Activated CD4-positive, alpha-beta T cell treated with anti-CD3 and anti-CD28 coated beads, Interleukin-2, amount 10 ng/mL, durations not matched to agents 24 days and 14 days (primary cell): ENCODE measurements at regions of chr6 and their contacts with region 1.

Region 1: GRCh38 chr6:43174263-43175112 is 3.4 kb downstream of the SRF start:
- DNase-seq: peak; percentile 99
- H3K4me3 Mint-ChIP-seq: peak overlapping the region; percentile 94
- H3K27ac Mint-ChIP-seq: peak overlapping the region; percentile 84
- H3K4me1 Mint-ChIP-seq: peaks cover 39% of the 10 kb centered on the region
- H3K27me3 Mint-ChIP-seq: no peaks in the 10 kb centered on the region

Region 2: GRCh38 chr6:42928986-42929820 is 245.3 kb before region 1 on chr6 and contains the start of gene CNPY3:
- intact Hi-C with region 1: loop called (anchors 1 kb)
- DNase-seq: peak; percentile 98
- H3K4me3 Mint-ChIP-seq: peak within 1 kb of the TSS; percentile 91
- H3K27ac Mint-ChIP-seq: peak within 1 kb of the TSS; percentile 98
- H3K4me1 Mint-ChIP-seq: peaks cover 34% of the 10 kb centered on the region
- H3K27me3 Mint-ChIP-seq: no peaks in the 10 kb centered on the region
- total RNA-seq, gene CNPY3: 45.9 and 49.0 TPM in 2 replicates

Region 3: GRCh38 chr6:42978487-42978838 is 196.0 kb before region 1 on chr6:
- intact Hi-C with region 1: no loop called
- DNase-seq: peak; percentile 68
- H3K4me3 Mint-ChIP-seq: peak overlapping the region; percentile 91
- H3K27ac Mint-ChIP-seq: peak overlapping the region; percentile 74
- H3K4me1 Mint-ChIP-seq: peaks cover 33% of the 10 kb centered on the region
- H3K27me3 Mint-ChIP-seq: no peaks in the 10 kb centered on the region

Region 4: DNA sequence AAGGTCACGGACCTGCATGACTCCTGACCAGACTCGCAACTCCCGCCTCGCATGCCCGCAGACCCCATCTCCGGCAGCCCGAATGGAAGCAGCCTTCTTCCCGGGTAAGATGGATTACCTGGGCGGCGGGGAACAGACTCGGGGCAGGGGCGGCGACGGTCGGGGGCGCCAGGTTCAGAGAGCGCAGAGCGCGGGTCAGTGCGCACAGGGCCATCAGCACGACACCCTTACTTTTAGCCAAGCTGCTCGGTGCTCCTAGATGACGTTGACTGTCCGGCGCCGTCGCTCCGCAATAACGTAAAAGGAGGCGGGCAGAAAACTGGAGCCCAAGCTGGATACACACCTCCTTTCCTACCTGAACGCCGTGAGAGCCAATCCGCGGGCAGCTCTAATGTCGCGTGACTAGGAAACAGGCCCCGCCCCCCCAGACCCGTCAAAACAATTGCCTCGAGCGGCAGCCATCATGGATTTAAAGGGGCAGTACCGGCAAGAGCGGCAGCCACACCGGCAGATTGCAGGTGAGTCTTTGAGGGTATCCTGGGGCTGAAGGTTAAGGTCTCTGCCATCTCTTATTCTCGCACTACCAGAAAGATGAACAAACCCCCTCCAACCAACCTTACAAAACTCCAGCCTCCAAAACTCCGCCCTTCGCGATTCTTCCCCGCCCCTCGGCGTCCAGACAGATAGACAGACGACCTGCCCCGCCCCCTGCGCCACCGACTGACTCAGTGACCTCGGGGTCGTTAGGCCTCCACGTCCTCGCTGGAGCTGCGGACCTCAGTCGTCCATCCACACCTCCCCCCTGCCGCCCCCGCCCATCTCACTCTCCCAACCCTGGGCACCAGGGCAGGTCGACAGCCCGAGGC is 115.1 kb before region 1 on chr6 and contains the starts of genes KLC4 and MRPL2:
- intact Hi-C with region 1: loop called (anchors 1 kb)
- DNase-seq: peak; percentile 99
- H3K4me3 Mint-ChIP-seq: peak within 1 kb of the TSS; percentile 99
- H3K27ac Mint-ChIP-seq: peak within 1 kb of the TSS; percentile 98
- H3K4me1 Mint-ChIP-seq: peaks cover 35% of the 10 kb centered on the region
- H3K27me3 Mint-ChIP-seq: no peaks in the 10 kb centered on the region
- total RNA-seq, gene KLC4: 9.5 and 10.7 TPM in 2 replicates
- total RNA-seq, gene MRPL2: 83.8 and 103 TPM in 2 replicates

Region 5: DNA sequence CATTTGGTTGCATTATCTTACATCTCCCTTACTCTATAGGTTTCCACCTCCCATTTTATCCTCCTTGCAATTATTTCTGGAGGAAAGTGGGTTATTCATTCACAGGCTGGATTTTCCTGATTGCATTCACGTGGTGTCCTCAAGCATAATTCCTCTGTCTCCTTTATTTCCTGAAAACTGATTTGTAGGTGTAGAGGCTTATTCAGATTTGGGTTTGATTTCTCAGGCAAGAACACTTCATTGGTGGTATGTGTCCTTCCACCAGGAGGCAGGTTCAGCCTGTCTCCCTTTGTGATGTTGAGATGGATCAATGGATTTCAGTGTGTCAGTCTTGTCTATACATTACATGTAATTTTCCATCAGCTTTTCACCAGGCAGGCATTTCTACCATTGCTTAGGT is 37.5 kb after region 1 on chr6:
- intact Hi-C with region 1: no loop called
- DNase-seq: no peak
- H3K4me3 Mint-ChIP-seq: no peak overlapping the region
- H3K27ac Mint-ChIP-seq: no peak overlapping the region
- H3K4me1 Mint-ChIP-seq: no peaks in the 10 kb centered on the region
- H3K27me3 Mint-ChIP-seq: no peaks in the 10 kb centered on the region

Region 6: GRCh38 chr6:43369174-43370022 is 194.9 kb after region 1 on chr6 and contains the start of gene ZNF318:
- intact Hi-C with region 1: loop called (anchors 2 kb)
- DNase-seq: peak; percentile 98
- H3K4me3 Mint-ChIP-seq: peak within 1 kb of the TSS; percentile 85
- H3K27ac Mint-ChIP-seq: peak within 1 kb of the TSS; percentile 94
- H3K4me1 Mint-ChIP-seq: peaks cover 35% of the 10 kb centered on the region
- H3K27me3 Mint-ChIP-seq: peaks cover 1% of the 10 kb centered on the region
- total RNA-seq, gene ZNF318: 9.3 and 10.3 TPM in 2 replicates

Region 7: DNA sequence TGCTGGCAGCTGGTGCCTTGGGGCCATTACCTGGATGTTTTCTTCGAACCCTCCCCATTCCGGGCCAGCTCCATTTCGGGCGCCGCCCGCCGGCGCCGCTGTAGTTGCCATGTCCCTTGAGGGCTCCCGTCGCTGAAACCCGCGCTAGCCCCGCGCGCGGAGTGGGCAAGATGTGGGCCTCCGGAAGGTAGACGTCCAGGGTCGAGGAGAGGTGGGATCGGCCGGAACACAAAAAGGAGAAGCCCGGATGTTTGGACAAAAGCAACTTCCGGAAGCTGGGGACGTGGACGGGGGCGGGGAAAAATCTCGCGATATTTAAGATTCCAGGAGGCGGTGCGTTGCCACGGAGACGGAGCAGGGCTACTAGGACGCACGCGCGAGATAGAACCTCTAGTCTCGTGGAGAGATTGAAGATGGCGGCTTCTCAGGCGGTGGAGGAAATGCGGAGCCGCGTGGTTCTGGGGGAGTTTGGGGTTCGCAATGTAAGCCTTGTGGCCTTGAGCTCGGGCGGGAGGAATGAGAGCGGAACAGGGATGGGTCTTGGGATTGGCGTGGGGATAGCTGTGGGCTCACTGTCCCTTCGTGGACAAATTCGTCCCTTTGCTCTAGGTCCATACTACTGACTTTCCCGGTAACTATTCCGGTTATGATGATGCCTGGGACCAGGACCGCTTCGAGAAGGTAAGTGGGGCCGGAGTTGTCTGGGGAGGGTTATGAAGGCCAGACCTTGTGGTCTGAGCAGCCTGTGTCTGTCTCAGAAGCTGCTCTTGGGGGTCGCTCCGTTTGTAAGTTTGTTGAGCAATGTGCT is 342.4 kb after region 1 on chr6 and contains the starts of genes POLR1C and YIPF3:
- intact Hi-C with region 1: loop called (anchors 5 kb)
- DNase-seq: peak; percentile 99
- H3K4me3 Mint-ChIP-seq: no peak within 1 kb of the TSS
- H3K27ac Mint-ChIP-seq: no peak within 1 kb of the TSS
- H3K4me1 Mint-ChIP-seq: peaks cover 19% of the 10 kb centered on the region
- H3K27me3 Mint-ChIP-seq: no peaks in the 10 kb centered on the region
- total RNA-seq, gene POLR1C: 91.7 TPM in 2 replicates
- total RNA-seq, gene YIPF3: 47.7 and 52.1 TPM in 2 replicates